ENCODE measurements at regions of chr12 and their contacts with region 1.

Region 1: GRCh38 chr12:26126340-26127284 is 1.8 kb upstream of the BHLHE41 start:
- DNase-seq: peak; percentile 89
- H3K4me3 ChIP-seq: peak overlapping the region; percentile 63 to 90 (median 88)
- H3K27ac ChIP-seq: peak overlapping the region; percentile 94
- H3K4me1 ChIP-seq: peaks cover 25% of the 10 kb centered on the region
- H3K27me3 ChIP-seq: no peaks in the 10 kb centered on the region
- CTCF ChIP-seq: peak in 1 of 2 donors; percentile 24

Region 2: GRCh38 chr12:26113853-26114719 is 12.5 kb before region 1 on chr12:
- CTCF ChIA-PET with region 1: no interaction called
- dilution Hi-C with region 1: no loop called
- in situ Hi-C with region 1: no loop called
- intact Hi-C with region 1: no loop called
- DNase-seq: peak; percentile 93
- H3K4me3 ChIP-seq: peak overlapping the region; percentile 24 to 54 (median 36)
- H3K27ac ChIP-seq: peak overlapping the region; percentile 81
- H3K4me1 ChIP-seq: peaks cover 29% of the 10 kb centered on the region
- H3K27me3 ChIP-seq: no peaks in the 10 kb centered on the region
- CTCF ChIP-seq: peak; percentile 24 to 56

Region 3: DNA sequence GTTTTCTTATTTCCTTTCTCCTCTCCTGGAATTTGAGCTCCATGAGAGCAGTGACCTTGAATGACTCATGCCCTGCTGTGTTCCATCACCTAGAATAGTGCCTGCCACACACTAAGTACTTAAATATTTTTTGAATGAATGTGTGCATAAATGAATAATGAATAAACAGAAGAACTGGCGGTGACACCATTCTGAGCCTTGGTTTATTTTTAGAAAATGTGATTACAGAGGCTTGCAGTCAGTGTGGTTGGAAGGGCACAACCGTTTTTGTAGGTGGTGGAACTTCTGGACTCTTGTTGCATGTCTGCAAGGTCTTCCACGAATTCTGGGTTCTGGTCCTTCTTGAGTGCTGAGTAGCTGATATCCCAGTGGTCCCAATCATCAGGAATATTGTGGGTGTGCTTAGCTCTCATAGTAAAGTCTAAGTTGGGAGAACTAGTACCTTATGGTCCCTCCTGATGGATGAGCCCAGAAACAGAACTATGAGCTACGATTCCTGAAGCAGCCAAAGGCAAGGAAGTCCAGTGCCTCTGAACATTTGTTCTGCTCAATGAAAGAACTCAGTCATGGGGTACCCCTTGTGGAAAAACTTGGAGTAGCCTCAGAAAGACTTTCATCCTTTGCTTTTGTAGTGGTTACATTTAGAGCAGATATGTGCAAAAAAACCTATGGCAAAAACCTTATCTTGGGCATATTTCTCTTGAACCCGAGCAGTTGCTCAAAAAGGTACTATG is 27.0 kb after region 1 on chr12:
- CTCF ChIA-PET with region 1: no interaction called
- dilution Hi-C with region 1: no loop called
- in situ Hi-C with region 1: no loop called
- intact Hi-C with region 1: loop called (anchors 1 kb)
- DNase-seq: peak; percentile 89
- H3K4me3 ChIP-seq: no peak overlapping the region
- H3K27ac ChIP-seq: peak overlapping the region; percentile 29
- H3K4me1 ChIP-seq: peaks cover 32% of the 10 kb centered on the region
- H3K27me3 ChIP-seq: no peaks in the 10 kb centered on the region
- CTCF ChIP-seq: peak in 1 of 2 donors; percentile 26

Region 4: GRCh38 chr12:26274441-26275312 is 148.1 kb after region 1 on chr12:
- CTCF ChIA-PET with region 1: no interaction called
- dilution Hi-C with region 1: no loop called
- in situ Hi-C with region 1: no loop called
- intact Hi-C with region 1: loop called (anchors 1 kb)
- DNase-seq: peak; percentile 100
- H3K4me3 ChIP-seq: no peak overlapping the region
- H3K27ac ChIP-seq: peak overlapping the region; percentile 87
- H3K4me1 ChIP-seq: peaks cover 63% of the 10 kb centered on the region
- H3K27me3 ChIP-seq: no peaks in the 10 kb centered on the region
- CTCF ChIP-seq: peak in 1 of 2 donors; percentile 29

Region 5: DNA sequence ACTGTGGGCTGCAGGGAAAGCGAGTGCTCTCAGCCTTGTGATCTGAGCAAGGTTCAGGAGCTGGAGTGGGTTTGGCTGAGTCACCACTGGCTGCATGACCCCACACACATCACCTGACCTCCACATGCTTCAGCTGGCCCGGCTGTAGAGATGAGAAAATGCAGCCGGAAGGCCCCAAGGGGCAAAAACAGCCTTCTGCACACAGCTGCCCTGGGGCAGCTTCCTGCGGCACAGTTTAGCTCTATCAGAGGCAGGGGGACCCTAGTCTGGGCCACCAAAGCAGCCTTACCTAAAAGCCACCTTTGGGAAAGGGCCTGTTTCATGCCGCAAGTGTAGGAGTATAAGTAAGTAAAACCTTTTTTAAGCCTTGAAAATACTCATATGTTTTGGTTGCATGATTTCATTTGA is 192.1 kb after region 1 on chr12:
- CTCF ChIA-PET with region 1: no interaction called
- dilution Hi-C with region 1: no loop called
- in situ Hi-C with region 1: no loop called
- intact Hi-C with region 1: loop called (anchors 1 kb)
- DNase-seq: peak; percentile 92
- H3K4me3 ChIP-seq: peak overlapping the region in 2 of 3 experiments; percentile 7 to 22
- H3K27ac ChIP-seq: peak overlapping the region; percentile 97
- H3K4me1 ChIP-seq: peaks cover 33% of the 10 kb centered on the region
- H3K27me3 ChIP-seq: no peaks in the 10 kb centered on the region
- CTCF ChIP-seq: no peak

Region 6: GRCh38 chr12:26523708-26524150 is 397.1 kb after region 1 on chr12:
- CTCF ChIA-PET with region 1: interaction called, 10 read pairs
- dilution Hi-C with region 1: no loop called
- in situ Hi-C with region 1: no loop called
- intact Hi-C with region 1: loop called (anchors 1 kb)
- DNase-seq: peak; percentile 92
- H3K4me3 ChIP-seq: no peak overlapping the region
- H3K27ac ChIP-seq: no peak overlapping the region
- H3K4me1 ChIP-seq: peaks cover 8% of the 10 kb centered on the region
- H3K27me3 ChIP-seq: no peaks in the 10 kb centered on the region
- CTCF ChIP-seq: no peak

Region 7: DNA sequence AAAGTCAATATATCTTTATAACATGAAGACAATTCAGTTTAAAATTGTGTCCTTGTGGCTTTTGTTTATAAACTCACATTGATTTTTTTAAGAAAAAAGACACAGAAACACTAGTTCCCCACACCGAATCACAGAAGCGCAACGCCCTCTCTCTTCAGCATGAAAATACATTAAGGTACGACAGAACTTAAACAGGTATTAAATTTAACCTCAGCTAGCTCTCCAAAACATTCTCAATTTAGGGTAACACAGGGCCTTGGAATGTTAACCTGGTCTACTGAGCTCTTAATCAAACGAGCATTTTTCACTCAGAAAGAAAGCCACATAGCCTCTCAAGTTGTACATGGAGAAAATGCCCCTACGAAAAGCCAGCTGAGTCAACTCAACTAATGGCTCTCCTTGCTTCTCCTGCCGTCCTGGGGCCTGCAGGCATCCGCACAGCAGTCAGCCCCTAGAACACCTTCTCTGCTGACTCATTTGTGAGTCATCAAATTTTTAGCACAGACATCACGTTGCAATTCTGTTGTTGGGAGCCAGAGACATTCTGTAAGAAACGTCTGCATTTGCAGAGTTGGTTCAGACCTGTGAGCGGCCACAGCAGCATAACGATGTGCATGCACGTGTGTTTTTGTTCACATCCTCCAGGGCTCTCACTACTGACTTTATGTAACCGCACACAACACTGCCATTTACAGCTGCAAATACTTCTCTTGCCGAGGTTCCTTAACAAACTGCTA is 564.8 kb after region 1 on chr12:
- CTCF ChIA-PET with region 1: no interaction called
- dilution Hi-C with region 1: no loop called
- in situ Hi-C with region 1: no loop called
- intact Hi-C with region 1: loop called (anchors 5 kb)
- DNase-seq: peak; percentile 98
- H3K4me3 ChIP-seq: no peak overlapping the region
- H3K27ac ChIP-seq: peak overlapping the region; percentile 44
- H3K4me1 ChIP-seq: peaks cover 37% of the 10 kb centered on the region
- H3K27me3 ChIP-seq: no peaks in the 10 kb centered on the region
- CTCF ChIP-seq: no peak

Measured in mammary epithelial cell (primary cell).